ENCODE measurements at regions of chr12 and their contacts with region 1.

Region 1: DNA sequence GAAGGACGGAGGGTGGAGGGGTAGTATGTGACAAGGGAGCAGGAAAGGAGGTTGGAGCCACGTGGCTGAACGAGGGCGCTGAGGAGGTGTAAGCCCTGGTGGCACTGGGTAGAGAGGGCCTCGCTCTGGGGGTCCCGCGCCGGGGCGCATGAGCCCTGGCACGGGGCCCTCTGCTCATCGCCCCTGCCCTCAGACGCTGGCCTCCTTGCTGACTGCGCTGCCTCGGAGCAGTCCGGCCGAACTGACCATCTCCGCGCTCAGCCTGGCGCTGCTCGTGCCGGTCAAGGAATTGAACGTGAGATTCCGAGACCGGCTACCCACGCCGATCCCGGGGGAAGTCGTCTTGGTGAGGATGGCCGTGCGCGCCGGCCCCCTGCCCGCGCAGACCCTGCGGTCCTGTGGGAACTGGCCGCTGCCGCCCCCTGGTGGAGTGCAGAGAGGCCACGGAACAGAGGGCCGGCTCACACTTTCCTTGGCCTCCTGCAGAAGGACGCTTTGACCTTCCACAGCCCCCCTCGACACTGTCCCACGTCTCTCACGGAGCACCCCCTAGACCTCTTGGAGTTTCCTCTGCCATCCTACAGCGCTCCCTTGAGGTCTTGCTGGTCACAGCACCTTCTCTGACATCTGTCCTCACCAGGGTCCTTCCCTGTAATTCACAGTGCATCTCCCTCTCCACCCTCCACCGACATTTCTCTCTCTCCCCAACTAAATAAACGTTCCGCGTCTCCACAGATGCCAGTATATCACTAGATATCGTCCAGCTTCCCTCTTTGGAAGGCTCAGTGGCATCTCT is 10.5 kb downstream of the ARHGEF25 start:
- DNase-seq: peak in 7 of 9 donors; percentile 35 to 75 (median 44)
- ATAC-seq: peak; percentile 76
- H3K4me3 ChIP-seq: peak overlapping the region; percentile 54
- H3K4me3 Mint-ChIP-seq: peak overlapping the region; percentile 59 to 87 (median 80)
- H3K27ac ChIP-seq: no peak overlapping the region
- H3K27ac Mint-ChIP-seq: no peak overlapping the region
- H3K4me1 ChIP-seq: peaks cover 20 to 30% of the 10 kb centered on the region in 2 donors
- H3K4me1 Mint-ChIP-seq: peaks cover 19 to 33% (median 30%) of the 10 kb centered on the region in 7 donors
- H3K27me3 ChIP-seq: peaks cover 17 to 50% of the 10 kb centered on the region in 2 donors
- H3K27me3 Mint-ChIP-seq: peaks cover 86 to 100% (median 87%) of the 10 kb centered on the region in 5 donors

Region 2: GRCh38 chr12:57238854-57239554 is 382.7 kb before region 1 on chr12:
- CTCF ChIA-PET with region 1: no interaction called
- POLR2A ChIA-PET with region 1: no interaction called
- intact Hi-C with region 1: loop called in 1 of 2 experiments (anchors 10 kb)
- DNase-seq: peak; percentile 72 to 94 (median 85)
- ATAC-seq: peak; percentile 89
- H3K4me3 ChIP-seq: peak overlapping the region; percentile 80
- H3K4me3 Mint-ChIP-seq: peak overlapping the region; percentile 87 to 99 (median 95)
- H3K27ac ChIP-seq: no peak overlapping the region
- H3K27ac Mint-ChIP-seq: peak overlapping the region in 6 of 9 donors; percentile 24 to 83 (median 64)
- H3K4me1 ChIP-seq: peaks cover 45 to 70% of the 10 kb centered on the region in 2 donors
- H3K4me1 Mint-ChIP-seq: peaks cover 52 to 82% (median 66%) of the 10 kb centered on the region in 7 donors
- H3K27me3 ChIP-seq: peaks cover 7 to 18% of the 10 kb centered on the region in 2 donors
- H3K27me3 Mint-ChIP-seq: peaks cover 48 to 72% (median 55%) of the 10 kb centered on the region in 5 donors

Region 3: GRCh38 chr12:57583008-57583831 is 38.5 kb before region 1 on chr12:
- CTCF ChIA-PET with region 1: interaction called, 72 read pairs
- POLR2A ChIA-PET with region 1: interaction called, 5 read pairs
- intact Hi-C with region 1: loop called (anchors 1 kb)
- DNase-seq: peak; percentile 24 to 79 (median 71)
- ATAC-seq: peak; percentile 100
- H3K4me3 ChIP-seq: no peak overlapping the region
- H3K4me3 Mint-ChIP-seq: no peak overlapping the region
- H3K27ac ChIP-seq: no peak overlapping the region
- H3K27ac Mint-ChIP-seq: peak overlapping the region in 1 of 9 donors; percentile 78
- H3K4me1 ChIP-seq: no peaks in the 10 kb centered on the region
- H3K4me1 Mint-ChIP-seq: peaks cover 5 to 15% (median 6%) of the 10 kb centered on the region in 7 donors
- H3K27me3 ChIP-seq: no peaks in the 10 kb centered on the region
- H3K27me3 Mint-ChIP-seq: peaks cover 0 to 18% (median 14%) of the 10 kb centered on the region in 5 donors

Region 4: GRCh38 chr12:57590536-57591479 is 30.9 kb before region 1 on chr12 and contains the start of gene PIP4K2C:
- CTCF ChIA-PET with region 1: interaction called, 72 read pairs
- POLR2A ChIA-PET with region 1: interaction called, 8 read pairs
- intact Hi-C with region 1: loop called in 1 of 2 experiments (anchors 2 kb)
- DNase-seq: peak; percentile 49 to 79 (median 65)
- ATAC-seq: peak; percentile 95
- H3K4me3 ChIP-seq: peak within 1 kb of the TSS; percentile 83
- H3K4me3 Mint-ChIP-seq: peak within 1 kb of the TSS; percentile 84 to 92 (median 89)
- H3K27ac ChIP-seq: peak within 1 kb of the TSS; percentile 76
- H3K27ac Mint-ChIP-seq: peak within 1 kb of the TSS; percentile 79 to 94 (median 91)
- H3K4me1 ChIP-seq: peaks cover 14 to 21% of the 10 kb centered on the region in 2 donors
- H3K4me1 Mint-ChIP-seq: peaks cover 24 to 35% (median 26%) of the 10 kb centered on the region in 7 donors
- H3K27me3 ChIP-seq: no peaks in the 10 kb centered on the region
- H3K27me3 Mint-ChIP-seq: peaks cover 0 to 3% (median 0%) of the 10 kb centered on the region in 5 donors
- total RNA-seq, gene PIP4K2C: 20.1 to 29.7 (median 21.9) TPM

Region 5: GRCh38 chr12:57604454-57604991 is 17.2 kb before region 1 on chr12 and contains the start of gene DTX3:
- CTCF ChIA-PET with region 1: interaction called, 8 read pairs
- POLR2A ChIA-PET with region 1: no interaction called
- intact Hi-C with region 1: loop called in 1 of 2 experiments (anchors 2 kb)
- DNase-seq: peak in 6 of 9 donors; percentile 31 to 51 (median 43)
- ATAC-seq: peak; percentile 68
- H3K4me3 ChIP-seq: peak within 1 kb of the TSS; percentile 71
- H3K4me3 Mint-ChIP-seq: peak within 1 kb of the TSS; percentile 81 to 91 (median 86)
- H3K27ac ChIP-seq: peak within 1 kb of the TSS; percentile 70
- H3K27ac Mint-ChIP-seq: peak within 1 kb of the TSS; percentile 84 to 93 (median 87)
- H3K4me1 ChIP-seq: peaks cover 19 to 20% of the 10 kb centered on the region in 2 donors
- H3K4me1 Mint-ChIP-seq: peaks cover 20 to 40% (median 32%) of the 10 kb centered on the region in 7 donors
- H3K27me3 ChIP-seq: no peaks in the 10 kb centered on the region
- H3K27me3 Mint-ChIP-seq: peaks cover 0 to 2% (median 0%) of the 10 kb centered on the region in 5 donors
- total RNA-seq, gene DTX3: 25.1 to 42.5 (median 35.6) TPM

Measured in naive thymus-derived CD4-positive, alpha-beta T cell (primary cell).